Posterior vena cava (tissue), 2 donors: ENCODE measurements at regions of chr9 and their contacts with region 1.

Region 1: GRCh38 chr9:130712564-130713285 is 19.1 kb downstream of the EXOSC2 start:
- DNase-seq: peak; percentile 99

Region 2: DNA sequence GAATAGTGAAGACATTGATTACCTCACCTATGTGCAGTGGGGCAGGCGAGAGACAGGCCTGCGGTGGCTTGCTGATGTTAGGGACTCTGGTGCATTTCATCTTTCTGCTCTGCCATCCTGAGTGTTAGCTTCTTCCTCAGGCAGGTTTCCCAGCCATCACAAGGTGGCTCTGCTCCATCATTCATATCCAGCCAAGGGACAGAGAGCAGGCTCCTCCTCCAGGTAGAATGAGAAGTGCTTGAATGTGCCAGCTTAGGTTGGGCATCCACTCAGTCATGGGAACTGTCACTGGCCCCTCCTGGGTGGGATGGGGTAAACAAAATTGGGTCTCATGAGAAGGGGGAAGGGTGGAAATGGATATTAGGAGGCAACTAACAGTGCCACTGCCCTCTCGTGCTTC is 634.2 kb before region 1 on chr9:
- intact Hi-C with region 1: no loop called
- DNase-seq: no peak

Region 3: DNA sequence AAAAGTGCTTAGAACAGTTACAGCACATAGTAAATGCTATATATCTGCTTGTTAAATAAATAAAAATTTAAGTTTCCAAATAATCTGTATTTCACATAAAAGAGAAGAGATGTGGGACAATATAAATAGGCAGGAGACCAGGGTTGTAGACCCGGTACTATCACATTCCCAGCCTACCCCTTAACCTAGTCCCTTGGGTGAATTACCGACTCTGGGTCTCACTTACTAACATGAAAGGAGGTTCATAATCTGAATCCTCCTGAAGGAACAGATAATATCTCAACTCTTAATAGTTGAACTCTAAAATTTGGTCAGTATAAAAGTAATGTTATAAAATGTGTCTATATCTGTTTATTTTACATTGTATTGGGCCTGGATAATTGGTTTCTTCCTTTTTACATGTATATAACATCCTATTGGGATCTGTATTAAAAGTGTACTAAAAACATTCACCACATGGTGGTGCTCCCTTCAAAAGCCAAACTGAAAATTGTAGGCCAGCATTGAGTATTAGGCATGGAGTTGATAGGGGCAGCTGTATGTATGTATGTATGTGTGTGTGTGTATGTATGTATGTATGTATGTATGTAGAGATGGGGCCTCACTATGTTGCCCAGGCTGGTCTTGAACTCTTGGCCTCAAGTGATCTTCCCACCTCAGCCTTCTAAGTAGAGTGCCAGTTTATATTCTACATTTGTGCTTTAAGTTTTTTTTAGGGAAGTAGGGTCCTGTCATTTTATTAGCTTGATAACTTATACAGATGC is 58.1 kb after region 1 on chr9:
- intact Hi-C with region 1: loop called (anchors 5 to 10 kb)
- DNase-seq: no peak

Region 4: GRCh38 chr9:130834371-130835311 is 121.9 kb after region 1 on chr9 and contains the start of gene ABL1:
- intact Hi-C with region 1: loop called in 1 of 2 experiments (anchors 1 kb)
- DNase-seq: peak; percentile 91
- total RNA-seq, gene ABL1: 80.5 to 85.0 TPM

Region 5: DNA sequence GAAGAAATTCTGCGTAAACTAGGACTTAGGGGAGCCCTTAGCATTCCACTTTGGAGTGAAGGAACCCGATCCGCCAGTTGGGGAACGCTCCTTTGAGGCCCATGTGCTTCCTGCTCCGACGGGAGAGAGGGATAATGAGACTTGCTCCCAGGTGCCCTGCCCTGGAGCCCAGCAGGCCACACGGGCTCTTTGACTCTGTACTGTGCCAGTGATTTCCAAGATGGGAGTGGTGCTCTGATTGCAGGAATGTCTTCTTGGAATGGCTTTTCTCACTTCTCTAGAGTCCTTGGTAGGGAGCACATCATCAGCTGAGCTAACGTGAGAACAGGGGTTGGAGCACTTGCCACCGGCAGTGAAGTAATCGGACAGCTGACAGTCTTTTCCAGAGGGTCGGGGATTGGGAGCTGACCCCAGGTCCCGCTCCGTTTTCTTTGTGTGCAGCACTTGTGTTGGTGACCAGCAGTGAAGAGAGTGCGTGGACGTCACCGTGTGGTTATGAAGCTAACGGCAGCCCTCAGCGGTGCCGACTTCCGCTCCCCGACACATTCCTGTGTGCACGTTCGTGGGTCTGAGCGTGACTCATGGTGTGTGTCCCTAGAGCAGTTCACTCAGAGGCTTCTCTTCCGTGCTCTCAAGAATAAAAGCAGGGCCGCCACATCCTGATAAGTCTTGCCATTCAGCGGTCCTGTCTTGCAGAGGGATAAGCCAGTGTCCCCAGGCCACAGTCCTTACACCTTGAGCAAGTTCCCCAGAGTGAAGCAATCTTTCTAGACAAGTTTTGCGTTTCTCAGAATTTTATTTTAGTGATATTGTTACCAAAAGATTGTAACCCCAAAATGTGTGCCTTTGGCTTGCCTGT is 148.0 kb after region 1 on chr9:
- intact Hi-C with region 1: loop called in 1 of 2 experiments (anchors 5 kb)
- DNase-seq: peak; percentile 96

Region 6: GRCh38 chr9:132026932-132027585 is 1314.3 kb after region 1 on chr9:
- intact Hi-C with region 1: loop called in 1 of 2 experiments (anchors 5 kb)
- DNase-seq: no peak